ENCODE measurements at regions of chr7 and their contacts with region 1.

Region 1: GRCh38 chr7:151110941-151111645 is 24.8 kb downstream of the AGAP3 start:
- DNase-seq: peak; percentile 90
- H3K4me3 ChIP-seq: no peak overlapping the region
- H3K27ac ChIP-seq: peak overlapping the region in 2 of 4 donors; percentile 10 to 70
- H3K4me1 ChIP-seq: peaks cover 0 to 54% (median 51%) of the 10 kb centered on the region in 4 donors
- H3K27me3 ChIP-seq: no peaks in the 10 kb centered on the region
- CTCF ChIP-seq: peak; percentile 83 to 88 (median 86)
- EP300 ChIP-seq: no peak
- POLR2A ChIP-seq: no peak

Region 2: DNA sequence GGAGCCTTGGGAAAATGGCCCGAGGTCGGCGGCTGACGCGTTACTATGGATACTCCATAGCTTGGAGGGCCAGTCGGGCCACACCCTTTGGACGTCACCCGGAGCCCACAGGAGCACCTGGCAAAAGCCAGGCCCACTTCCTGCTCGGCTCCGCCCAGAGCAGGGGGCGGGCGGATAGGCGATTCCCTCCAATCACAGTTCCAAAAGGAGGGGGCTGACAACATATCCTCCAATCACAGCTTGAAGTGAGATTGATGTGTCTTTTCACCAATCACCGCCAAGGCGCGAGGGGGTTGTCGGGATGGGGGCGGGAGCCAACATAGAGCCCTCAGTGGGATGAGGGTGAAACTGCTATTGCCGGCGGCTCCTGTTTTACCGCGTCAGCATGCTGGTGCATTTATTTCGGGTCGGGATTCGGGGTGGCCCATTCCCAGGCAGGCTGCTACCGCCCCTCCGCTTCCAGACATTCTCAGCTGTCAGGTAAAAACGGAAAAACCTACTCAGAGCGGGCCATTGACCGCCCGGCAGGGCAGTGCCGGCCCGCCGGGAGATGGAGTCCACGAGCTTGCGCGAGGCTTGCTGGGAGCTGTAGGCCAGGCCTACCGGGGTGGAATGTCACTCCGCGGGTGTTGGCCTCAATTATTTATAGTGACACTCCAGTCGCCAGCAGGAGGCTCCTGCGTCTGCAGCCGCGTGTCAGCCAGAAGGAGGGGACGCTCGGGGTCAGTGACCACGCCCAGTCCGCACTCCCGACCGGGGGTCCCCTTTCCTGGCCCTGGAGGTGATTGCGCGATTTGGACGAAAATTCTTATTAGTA is 82.8 kb before region 1 on chr7 and contains the start of gene ABCB8:
- intact Hi-C with region 1: loop called (anchors 2 kb)
- DNase-seq: peak; percentile 99
- H3K4me3 ChIP-seq: peak within 1 kb of the TSS; percentile 62 to 77 (median 68)
- H3K27ac ChIP-seq: peak within 1 kb of the TSS; percentile 82 to 89 (median 84)
- H3K4me1 ChIP-seq: peaks cover 0 to 23% (median 15%) of the 10 kb centered on the region in 4 donors
- H3K27me3 ChIP-seq: no peaks in the 10 kb centered on the region
- CTCF ChIP-seq: peak; percentile 24 to 61 (median 38)
- EP300 ChIP-seq: peak in 1 of 4 donors; percentile 39
- POLR2A ChIP-seq: peak in 1 of 2 donors; percentile 16
- total RNA-seq, gene ABCB8: 9.7 to 20.8 (median 19.5) TPM

Region 3: DNA sequence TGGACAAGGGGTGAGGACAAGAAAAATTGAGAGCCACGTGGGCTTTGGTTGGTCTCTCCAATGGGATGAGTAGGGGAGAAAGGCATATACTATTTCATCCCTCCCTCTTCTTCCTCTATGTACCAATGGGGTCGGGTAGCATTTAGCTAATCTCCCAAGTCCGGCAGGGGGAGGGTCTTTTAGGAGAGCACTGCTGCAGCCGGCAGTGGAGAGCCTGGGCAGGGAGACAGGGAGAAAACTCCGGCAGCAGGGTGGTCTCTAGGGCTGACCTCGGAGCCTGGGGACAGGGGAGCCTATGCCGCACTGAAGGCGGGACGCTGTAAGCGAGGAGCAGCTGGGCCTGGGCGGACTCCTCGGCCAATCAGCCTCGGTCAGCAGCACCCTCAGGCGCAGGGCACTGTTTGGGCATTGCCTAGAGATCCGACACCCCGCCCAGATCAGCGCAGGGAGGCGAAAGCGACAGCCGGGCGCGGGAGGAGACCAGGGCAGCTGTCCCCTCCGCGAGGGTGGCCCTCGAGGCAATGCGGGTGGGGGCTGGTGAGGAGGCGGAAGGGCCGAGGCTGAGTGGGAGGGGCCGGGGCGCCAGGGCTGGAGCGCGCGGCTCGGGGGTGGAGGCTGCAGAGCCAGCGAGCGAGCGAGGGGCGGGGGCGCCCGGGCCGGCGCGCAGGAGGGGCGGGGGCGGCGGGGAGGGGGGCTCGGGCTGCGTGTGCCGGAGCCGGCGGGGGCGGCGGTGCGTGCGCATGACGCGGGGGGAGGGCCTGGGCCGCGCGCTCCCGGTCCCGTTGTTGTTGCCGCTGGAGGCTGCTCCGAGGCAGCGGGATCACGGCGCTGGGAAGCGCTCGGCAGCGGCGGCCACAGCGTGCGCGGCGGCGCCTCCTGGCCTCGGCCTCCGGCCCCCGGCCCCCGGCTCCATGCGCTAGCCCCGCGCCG is 25.1 kb before region 1 on chr7 and contains the start of gene AGAP3:
- intact Hi-C with region 1: loop called (anchors 1 kb)
- DNase-seq: peak; percentile 94
- H3K4me3 ChIP-seq: peak within 1 kb of the TSS; percentile 59 to 89 (median 74)
- H3K27ac ChIP-seq: peak within 1 kb of the TSS; percentile 86 to 96 (median 88)
- H3K4me1 ChIP-seq: peaks cover 0 to 72% (median 67%) of the 10 kb centered on the region in 4 donors
- H3K27me3 ChIP-seq: no peaks in the 10 kb centered on the region
- CTCF ChIP-seq: no peak
- EP300 ChIP-seq: no peak
- POLR2A ChIP-seq: peak in 1 of 2 donors; percentile 69
- total RNA-seq, gene AGAP3: 34.2 to 89.7 (median 40.9) TPM